Activated CD4-positive, alpha-beta memory T cell treated with anti-CD3 and anti-CD28 coated beads, Interleukin-2, amount 10 ng/mL, durations not matched to agents 7 days and 5 days (primary cell): ENCODE measurements at regions of chr10 and their contacts with region 1.

Region 1: DNA sequence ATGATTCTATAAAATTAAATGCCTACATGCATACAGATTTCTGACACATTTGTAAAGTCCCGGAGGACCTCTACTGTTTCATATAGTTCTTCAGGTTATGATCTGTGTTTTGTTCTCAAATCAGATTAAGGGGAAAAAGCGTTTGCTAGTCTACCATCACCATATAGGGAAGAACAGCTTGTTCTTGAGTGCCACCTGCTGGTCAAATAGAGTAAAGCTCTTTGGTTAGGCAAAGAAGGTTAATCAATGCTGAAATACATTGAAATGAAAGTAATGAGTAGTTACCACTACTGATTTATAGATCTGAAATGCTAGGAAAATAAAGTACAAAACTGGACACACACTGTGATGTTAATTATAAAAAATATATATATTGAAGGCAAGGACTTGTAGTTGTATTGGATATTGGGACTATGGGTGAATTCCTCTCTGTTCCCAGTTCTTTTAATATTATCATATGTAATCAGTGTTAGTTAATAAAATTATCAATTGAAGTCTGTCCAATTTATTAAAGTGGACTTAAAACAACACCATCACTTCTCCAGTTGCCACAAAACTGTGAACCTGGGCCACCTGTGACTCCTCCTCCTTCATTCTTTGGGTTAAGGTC is 72.6 kb upstream of the PDLIM1 start:
- DNase-seq: peak; percentile 50
- H3K4me3 Mint-ChIP-seq: no peak overlapping the region
- H3K27ac Mint-ChIP-seq: no peak overlapping the region
- H3K4me1 Mint-ChIP-seq: no peaks in the 10 kb centered on the region
- H3K27me3 Mint-ChIP-seq: peaks cover 8% of the 10 kb centered on the region

Region 2: DNA sequence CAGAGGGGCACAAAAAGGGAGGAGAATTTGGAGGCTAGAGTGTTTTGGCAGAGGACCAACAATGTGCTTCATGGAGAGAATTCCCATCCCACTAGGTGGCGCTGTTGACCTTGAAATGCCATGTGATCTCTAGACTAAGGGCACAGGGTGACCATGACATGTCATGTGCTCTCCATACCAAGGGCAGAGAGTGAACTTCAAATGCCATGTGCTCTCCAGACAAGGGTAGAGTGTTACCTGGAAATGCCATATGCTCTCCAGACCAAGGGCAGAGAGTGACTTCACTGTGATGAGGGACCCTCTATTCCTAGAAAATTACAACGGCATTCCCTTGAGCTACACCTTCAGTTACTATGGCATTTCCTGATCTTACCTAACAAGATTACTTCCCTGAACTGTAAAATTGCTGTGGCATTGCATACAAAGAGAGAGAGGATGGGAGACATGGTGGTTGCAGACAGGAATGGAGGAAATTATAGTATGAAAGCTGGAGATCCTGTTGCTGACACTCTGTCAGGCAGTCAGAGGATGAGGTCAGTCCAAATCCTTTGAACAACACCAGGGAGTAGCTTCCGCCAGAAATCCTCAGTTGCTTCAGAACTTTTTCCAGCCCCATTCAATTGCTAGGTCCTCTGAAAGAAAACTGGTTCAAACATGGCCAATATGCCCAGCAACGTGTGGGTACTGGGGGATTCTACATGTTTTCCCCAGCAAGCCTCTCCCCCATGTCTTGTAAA is 230.2 kb before region 1 on chr10:
- CTCF ChIA-PET with region 1: interaction called, 26 read pairs
- POLR2A ChIA-PET with region 1: no interaction called
- DNase-seq: peak; percentile 80
- H3K4me3 Mint-ChIP-seq: no peak overlapping the region
- H3K27ac Mint-ChIP-seq: no peak overlapping the region
- H3K4me1 Mint-ChIP-seq: no peaks in the 10 kb centered on the region
- H3K27me3 Mint-ChIP-seq: no peaks in the 10 kb centered on the region

Region 3: DNA sequence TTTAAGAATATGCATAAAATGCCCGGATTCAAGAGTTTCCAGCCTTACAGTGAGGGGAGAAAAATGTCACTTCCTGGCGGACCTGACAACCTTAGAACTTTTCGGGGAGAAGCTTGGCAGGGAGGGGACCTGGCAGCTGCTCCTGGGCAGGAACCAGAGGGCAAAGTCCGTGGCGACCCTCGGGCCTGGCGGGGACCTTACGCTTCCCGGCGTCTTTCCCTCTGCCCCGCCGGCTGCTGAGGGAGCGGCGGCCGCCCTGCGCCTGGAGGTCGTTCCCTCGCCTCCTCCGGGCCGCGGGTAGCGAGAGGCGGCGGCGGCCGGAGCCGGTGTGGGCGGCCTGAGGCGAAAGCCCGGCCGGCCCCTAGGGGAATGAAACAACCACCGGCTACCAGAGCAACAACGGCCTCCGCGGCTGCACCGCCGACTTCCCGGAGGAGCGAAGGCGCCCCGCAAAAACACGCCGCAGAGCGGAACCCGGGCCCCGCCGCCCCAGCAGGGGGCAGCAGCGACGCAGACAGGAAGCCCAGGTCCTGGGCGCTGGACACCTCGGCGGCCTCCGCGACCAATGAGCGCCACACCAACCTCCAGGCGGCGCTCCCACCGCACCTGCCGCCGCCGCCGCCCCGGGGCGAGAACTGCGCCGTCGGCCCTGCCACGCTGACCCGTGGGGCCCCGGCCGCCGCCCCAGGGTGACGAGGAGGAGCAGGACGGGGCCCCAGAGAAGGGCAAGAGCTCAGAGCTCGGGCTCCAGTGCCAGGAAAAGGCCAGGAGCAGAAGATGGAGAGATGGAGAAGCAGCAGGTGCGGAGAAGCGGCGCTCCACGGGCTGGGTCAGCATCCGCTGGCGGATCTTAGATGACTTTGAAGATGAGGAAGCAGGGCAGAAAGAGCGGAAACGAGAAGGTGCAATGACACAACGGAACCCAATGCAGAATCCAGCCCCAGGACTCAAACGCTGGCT is 179.9 kb before region 1 on chr10:
- CTCF ChIA-PET with region 1: interaction called, 11 read pairs
- POLR2A ChIA-PET with region 1: interaction called, 4 read pairs
- DNase-seq: peak; percentile 78
- H3K4me3 Mint-ChIP-seq: peak overlapping the region; percentile 50
- H3K27ac Mint-ChIP-seq: no peak overlapping the region
- H3K4me1 Mint-ChIP-seq: peaks cover 9% of the 10 kb centered on the region
- H3K27me3 Mint-ChIP-seq: peaks cover 51% of the 10 kb centered on the region

Region 4: DNA sequence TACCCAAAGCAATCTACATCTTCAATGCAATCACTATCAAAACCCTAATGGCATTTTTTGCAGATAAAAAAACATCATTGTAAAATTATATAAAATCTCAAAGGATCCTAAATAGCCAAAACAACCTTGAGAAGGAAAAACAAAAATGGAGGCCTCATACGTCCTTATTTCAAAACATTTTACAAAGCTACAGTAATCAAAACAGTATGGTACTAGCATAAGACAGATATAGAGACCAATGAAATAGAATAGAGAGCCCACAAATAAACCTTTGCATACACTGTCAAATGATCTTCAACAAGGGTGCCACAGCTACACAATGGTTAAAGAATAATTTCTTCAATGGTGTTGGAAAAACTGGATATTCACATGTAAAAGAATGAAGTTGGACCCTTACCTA is 107.1 kb before region 1 on chr10:
- CTCF ChIA-PET with region 1: no interaction called
- POLR2A ChIA-PET with region 1: no interaction called
- DNase-seq: no peak
- H3K4me3 Mint-ChIP-seq: no peak overlapping the region
- H3K27ac Mint-ChIP-seq: no peak overlapping the region
- H3K4me1 Mint-ChIP-seq: peaks cover 6% of the 10 kb centered on the region
- H3K27me3 Mint-ChIP-seq: peaks cover 15% of the 10 kb centered on the region

Region 5: GRCh38 chr10:95397747-95398146 is 34.3 kb after region 1 on chr10:
- CTCF ChIA-PET with region 1: no interaction called
- POLR2A ChIA-PET with region 1: no interaction called
- DNase-seq: no peak
- H3K4me3 Mint-ChIP-seq: no peak overlapping the region
- H3K27ac Mint-ChIP-seq: no peak overlapping the region
- H3K4me1 Mint-ChIP-seq: peaks cover 11% of the 10 kb centered on the region
- H3K27me3 Mint-ChIP-seq: no peaks in the 10 kb centered on the region